H1 (cell line): ENCODE measurements at regions of chr10 and their contacts with region 1.

Region 1: DNA sequence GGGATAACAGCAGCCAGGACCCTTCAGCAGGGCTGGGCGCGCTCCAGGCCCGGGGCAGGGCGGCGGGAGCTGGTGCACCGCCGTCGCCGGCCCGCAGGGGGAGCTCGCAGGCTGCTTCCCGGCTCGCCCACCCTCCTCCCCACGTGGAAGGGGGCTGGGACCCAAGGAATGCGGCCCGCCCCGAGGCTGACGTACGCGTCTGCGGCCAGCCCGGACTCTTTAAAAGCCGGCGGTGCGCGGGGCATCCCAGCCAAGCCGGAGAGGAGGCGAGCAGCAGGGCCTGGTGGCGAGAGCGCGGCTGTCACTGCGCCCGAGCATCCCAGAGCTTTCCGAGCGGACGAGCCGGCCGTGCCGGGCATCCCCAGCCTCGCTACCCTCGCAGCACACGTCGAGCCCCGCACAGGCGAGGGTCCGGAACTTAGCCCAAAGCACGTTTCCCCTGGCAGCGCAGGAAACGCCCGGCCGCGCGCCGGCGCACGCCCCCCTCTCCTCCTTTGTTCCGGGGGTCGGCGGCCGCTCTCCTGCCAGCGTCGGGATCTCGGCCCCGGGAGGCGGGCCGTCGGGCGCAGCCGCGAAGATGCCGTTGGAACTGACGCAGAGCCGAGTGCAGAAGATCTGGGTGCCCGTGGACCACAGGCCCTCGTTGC is at the start of gene PFKFB3:
- DNase-seq: peak; percentile 82 to 99
- H3K4me3 ChIP-seq: peak within 1 kb of the TSS; percentile 63 to 92 (median 80)
- H3K27ac ChIP-seq: peak within 1 kb of the TSS; percentile 91
- H3K4me1 ChIP-seq: peaks cover 3 to 10% (median 7%) of the 10 kb centered on the region in 4 experiments
- H3K27me3 ChIP-seq: peaks cover 19 to 37% (median 33%) of the 10 kb centered on the region in 4 experiments; a peak in 6 of 7 replicates
- CTCF ChIP-seq: peak; percentile 85 to 91 (median 88)
- EP300 ChIP-seq: peak in 1 of 2 experiments; percentile 77; a peak in 1 of 3 replicates
- POLR2A ChIP-seq: peak; percentile 100
- RAD21 ChIP-seq: peak; percentile 72 to 78
- total RNA-seq, gene PFKFB3: 27.3 and 32.0 TPM in 2 replicates

Region 2: DNA sequence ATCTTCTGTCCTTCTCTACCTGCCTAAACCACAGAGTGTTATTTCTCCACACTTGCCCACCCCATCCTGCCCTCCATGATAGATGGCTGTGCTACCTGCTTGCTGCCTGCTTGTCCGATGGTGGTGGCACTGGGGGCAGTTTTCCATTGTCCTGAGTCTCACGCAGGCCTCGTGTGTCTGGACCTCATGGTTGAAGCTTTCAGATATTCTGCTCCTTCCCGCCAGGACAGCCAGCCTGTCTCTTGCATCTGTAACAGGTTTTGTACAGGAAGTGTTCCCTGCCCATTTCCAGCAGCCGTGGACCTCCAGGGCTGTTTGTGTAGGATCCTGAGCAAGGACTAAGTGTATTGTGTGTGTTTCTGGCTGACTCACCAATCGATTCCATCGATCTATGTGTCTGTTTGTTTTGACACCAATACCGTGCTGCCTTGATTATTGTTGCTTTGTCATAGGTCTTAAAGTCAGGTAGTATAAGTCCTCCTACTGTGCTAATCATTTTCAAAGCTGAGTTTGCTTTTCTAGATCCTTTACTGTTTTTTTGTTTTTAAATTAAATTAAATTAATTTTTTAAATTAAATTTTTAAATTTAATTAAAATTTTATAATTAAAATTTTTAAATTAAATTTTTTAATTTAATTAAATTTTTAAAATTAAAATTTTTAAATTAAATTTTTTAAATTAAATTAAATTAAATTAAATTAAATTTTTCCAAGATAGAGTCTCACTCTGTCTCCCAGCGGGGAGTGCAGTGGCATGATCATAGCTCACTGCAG is 233.9 kb before region 1 on chr10:
- CTCF ChIA-PET with region 1: no interaction called
- POLR2A ChIA-PET with region 1: no interaction called
- DNase-seq: peak in 1 of 2 experiments; percentile 38
- H3K4me3 ChIP-seq: no peak overlapping the region
- H3K27ac ChIP-seq: no peak overlapping the region
- H3K4me1 ChIP-seq: no peaks in the 10 kb centered on the region
- H3K27me3 ChIP-seq: no peaks in the 10 kb centered on the region
- CTCF ChIP-seq: no peak
- EP300 ChIP-seq: no peak
- POLR2A ChIP-seq: no peak
- RAD21 ChIP-seq: no peak

Region 3: DNA sequence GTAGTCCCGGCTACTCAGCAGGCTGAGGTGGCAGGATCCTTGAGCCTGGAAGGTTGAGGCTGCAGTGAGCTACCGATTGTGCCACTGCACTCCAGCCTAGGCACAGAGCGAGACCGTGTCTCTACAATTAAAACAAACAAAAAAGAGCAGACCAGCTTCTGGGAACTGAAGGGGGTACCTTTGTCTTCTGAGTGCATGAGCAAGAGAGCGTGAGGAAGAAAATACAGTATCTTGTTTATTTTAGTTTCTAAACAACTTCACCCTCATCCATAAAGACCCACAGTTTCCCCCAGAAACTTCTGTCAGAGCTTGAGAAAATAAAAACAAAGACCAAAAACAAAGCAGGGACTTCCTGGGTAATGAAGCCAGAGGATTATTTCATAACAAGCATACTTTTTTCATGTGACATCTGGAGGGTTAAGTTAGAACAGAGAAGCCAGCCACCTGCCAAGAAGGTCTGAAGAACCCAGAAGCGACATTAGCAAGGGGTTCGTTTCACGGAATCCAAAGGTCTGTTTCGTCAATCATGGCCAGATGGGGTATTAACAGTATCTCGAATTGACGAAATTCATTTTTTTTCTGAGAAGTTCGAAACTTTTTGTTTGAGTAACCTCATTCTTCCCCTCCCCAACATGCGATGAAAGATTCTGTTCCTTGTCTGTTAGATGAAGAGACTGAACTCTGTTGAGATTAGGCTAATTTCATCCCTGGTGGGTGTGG is 130.4 kb before region 1 on chr10:
- CTCF ChIA-PET with region 1: no interaction called
- POLR2A ChIA-PET with region 1: no interaction called
- DNase-seq: no peak
- H3K4me3 ChIP-seq: no peak overlapping the region
- H3K27ac ChIP-seq: no peak overlapping the region
- H3K4me1 ChIP-seq: no peaks in the 10 kb centered on the region
- H3K27me3 ChIP-seq: no peaks in the 10 kb centered on the region
- CTCF ChIP-seq: no peak
- EP300 ChIP-seq: no peak
- POLR2A ChIP-seq: no peak
- RAD21 ChIP-seq: no peak

Region 4: DNA sequence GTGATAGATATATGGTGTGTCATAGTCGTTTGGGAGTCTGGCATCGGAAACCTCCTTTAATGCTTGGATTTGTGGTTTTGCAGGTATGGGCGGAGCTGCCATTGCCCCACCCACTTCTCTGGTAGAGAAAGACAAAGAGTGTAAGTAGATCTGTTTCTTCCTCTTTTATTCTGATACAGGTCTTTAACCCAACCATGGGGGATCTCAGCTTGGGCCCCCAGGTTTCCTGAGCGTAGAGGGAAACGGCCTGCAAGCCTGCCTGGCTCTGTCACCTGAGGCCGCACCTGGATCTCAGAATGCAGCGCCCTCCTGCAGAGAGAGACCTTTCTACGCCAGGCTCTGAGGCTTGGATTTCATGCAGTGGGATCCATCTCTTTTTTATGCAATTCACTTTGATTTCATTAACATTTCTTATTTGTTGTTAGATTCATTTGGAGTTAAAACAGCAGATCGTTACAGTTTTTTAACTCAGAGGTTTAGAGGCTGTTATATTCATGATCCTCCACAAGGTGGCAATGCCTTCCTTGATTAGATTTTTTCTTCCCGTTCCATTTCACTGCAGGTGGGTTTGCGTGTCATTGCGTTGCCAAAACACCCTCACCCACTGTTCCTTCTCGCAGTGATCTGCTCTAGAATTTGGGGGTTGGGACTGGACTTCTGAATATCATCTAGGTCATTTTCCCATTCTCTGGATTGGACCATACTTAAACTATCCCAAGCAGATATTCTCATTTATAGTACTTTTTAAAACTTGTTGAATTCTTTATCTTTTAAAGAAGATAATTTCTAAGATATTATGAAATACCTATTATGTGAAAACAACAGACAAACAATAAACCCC is 94.0 kb before region 1 on chr10:
- CTCF ChIA-PET with region 1: no interaction called
- POLR2A ChIA-PET with region 1: interaction called, 10 read pairs
- DNase-seq: peak in 1 of 2 experiments; percentile 49
- H3K4me3 ChIP-seq: peak overlapping the region in 1 of 4 experiments; percentile 19; a peak in 1 of 8 replicates
- H3K27ac ChIP-seq: no peak overlapping the region
- H3K4me1 ChIP-seq: peaks cover 4 to 21% (median 10%) of the 10 kb centered on the region in 4 experiments; a peak in 4 of 7 replicates
- H3K27me3 ChIP-seq: no peaks in the 10 kb centered on the region
- CTCF ChIP-seq: peak in 2 of 3 experiments; percentile 47 to 57; a peak in 3 of 4 replicates
- EP300 ChIP-seq: no peak
- POLR2A ChIP-seq: no peak
- RAD21 ChIP-seq: peak; percentile 72 to 76

Region 5: GRCh38 chr10:6163364-6164270 is 39.2 kb before region 1 on chr10:
- CTCF ChIA-PET with region 1: interaction called, 4 read pairs
- POLR2A ChIA-PET with region 1: interaction called, 15 read pairs
- DNase-seq: peak in 1 of 2 experiments; percentile 94
- H3K4me3 ChIP-seq: peak overlapping the region; percentile 39 to 88 (median 54)
- H3K27ac ChIP-seq: no peak overlapping the region
- H3K4me1 ChIP-seq: peaks cover 0 to 2% (median 0%) of the 10 kb centered on the region in 4 experiments; a peak in 1 of 7 replicates
- H3K27me3 ChIP-seq: no peaks in the 10 kb centered on the region
- CTCF ChIP-seq: no peak
- EP300 ChIP-seq: no peak
- POLR2A ChIP-seq: peak in 1 of 2 experiments; percentile 49; a peak in 1 of 3 replicates
- RAD21 ChIP-seq: no peak

Region 6: GRCh38 chr10:6182454-6183098 is 20.2 kb before region 1 on chr10:
- CTCF ChIA-PET with region 1: interaction called, 7 read pairs
- POLR2A ChIA-PET with region 1: interaction called, 17 read pairs
- DNase-seq: no peak
- H3K4me3 ChIP-seq: no peak overlapping the region
- H3K27ac ChIP-seq: no peak overlapping the region
- H3K4me1 ChIP-seq: peaks cover 0 to 6% (median 0%) of the 10 kb centered on the region in 4 experiments; a peak in 1 of 7 replicates
- H3K27me3 ChIP-seq: no peaks in the 10 kb centered on the region
- CTCF ChIP-seq: no peak
- EP300 ChIP-seq: no peak
- POLR2A ChIP-seq: no peak
- RAD21 ChIP-seq: no peak

Region 7: GRCh38 chr10:6232846-6233724 is 30.3 kb after region 1 on chr10:
- CTCF ChIA-PET with region 1: interaction called, 5 read pairs
- POLR2A ChIA-PET with region 1: interaction called, 13 read pairs
- DNase-seq: no peak
- H3K4me3 ChIP-seq: no peak overlapping the region
- H3K27ac ChIP-seq: no peak overlapping the region
- H3K4me1 ChIP-seq: no peaks in the 10 kb centered on the region
- H3K27me3 ChIP-seq: no peaks in the 10 kb centered on the region
- CTCF ChIP-seq: no peak
- EP300 ChIP-seq: no peak
- POLR2A ChIP-seq: no peak
- RAD21 ChIP-seq: no peak

Region 8: GRCh38 chr10:6254201-6254600 is 51.4 kb after region 1 on chr10:
- CTCF ChIA-PET with region 1: no interaction called
- POLR2A ChIA-PET with region 1: no interaction called
- DNase-seq: no peak
- H3K4me3 ChIP-seq: no peak overlapping the region
- H3K27ac ChIP-seq: no peak overlapping the region
- H3K4me1 ChIP-seq: no peaks in the 10 kb centered on the region
- H3K27me3 ChIP-seq: no peaks in the 10 kb centered on the region
- CTCF ChIP-seq: no peak
- EP300 ChIP-seq: no peak
- POLR2A ChIP-seq: no peak
- RAD21 ChIP-seq: no peak

Region 9: DNA sequence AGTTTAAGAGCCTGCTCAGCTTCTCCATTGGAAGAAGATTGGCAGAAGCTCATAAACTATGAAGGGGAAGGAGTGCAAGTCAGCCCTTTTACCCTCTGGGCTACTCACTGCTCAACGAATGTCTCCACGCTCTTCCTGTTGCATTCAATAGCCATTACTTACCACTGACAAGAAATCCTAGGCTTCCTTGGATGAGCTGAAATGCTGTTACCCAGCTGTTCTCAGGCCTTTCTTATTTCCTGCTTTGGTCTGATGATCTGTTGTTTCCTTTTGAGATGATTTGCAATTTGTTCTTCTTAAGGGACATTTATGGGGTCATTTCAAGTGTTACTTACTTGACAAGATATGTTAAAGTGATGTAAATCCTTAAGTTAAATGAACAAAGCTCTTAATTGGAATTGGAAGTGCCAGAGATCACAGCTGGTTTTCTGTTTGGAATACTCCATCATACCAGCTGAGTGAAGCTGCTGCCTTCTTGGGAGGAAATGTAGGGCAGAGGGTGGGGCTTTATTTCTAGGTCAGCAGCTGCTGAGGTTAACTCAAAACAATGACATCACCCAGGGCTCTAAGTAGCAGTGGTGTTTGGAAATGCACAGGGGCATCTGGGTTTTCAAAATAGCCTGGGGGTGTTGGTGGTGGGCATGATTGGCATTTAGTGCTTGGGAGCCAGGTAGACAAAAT is 207.3 kb after region 1 on chr10:
- CTCF ChIA-PET with region 1: interaction called, 14 read pairs
- POLR2A ChIA-PET with region 1: interaction called, 9 read pairs
- DNase-seq: no peak
- H3K4me3 ChIP-seq: no peak overlapping the region
- H3K27ac ChIP-seq: no peak overlapping the region
- H3K4me1 ChIP-seq: peaks cover 0 to 3% (median 0%) of the 10 kb centered on the region in 4 experiments; a peak in 1 of 7 replicates
- H3K27me3 ChIP-seq: no peaks in the 10 kb centered on the region
- CTCF ChIP-seq: no peak
- EP300 ChIP-seq: no peak
- POLR2A ChIP-seq: no peak
- RAD21 ChIP-seq: no peak

Region 10: GRCh38 chr10:6445501-6446316 is 242.9 kb after region 1 on chr10:
- CTCF ChIA-PET with region 1: no interaction called
- POLR2A ChIA-PET with region 1: no interaction called
- DNase-seq: no peak
- H3K4me3 ChIP-seq: no peak overlapping the region
- H3K27ac ChIP-seq: no peak overlapping the region
- H3K4me1 ChIP-seq: no peaks in the 10 kb centered on the region
- H3K27me3 ChIP-seq: no peaks in the 10 kb centered on the region
- CTCF ChIP-seq: peak; percentile 58 to 67 (median 66)
- EP300 ChIP-seq: no peak
- POLR2A ChIP-seq: no peak
- RAD21 ChIP-seq: peak; percentile 60 to 65